Activated naive CD4-positive, alpha-beta T cell treated with anti-CD3 and anti-CD28 coated beads for 36 hours (primary cell): ENCODE measurements at regions of chrX and their contacts with region 1.

Region 1: DNA sequence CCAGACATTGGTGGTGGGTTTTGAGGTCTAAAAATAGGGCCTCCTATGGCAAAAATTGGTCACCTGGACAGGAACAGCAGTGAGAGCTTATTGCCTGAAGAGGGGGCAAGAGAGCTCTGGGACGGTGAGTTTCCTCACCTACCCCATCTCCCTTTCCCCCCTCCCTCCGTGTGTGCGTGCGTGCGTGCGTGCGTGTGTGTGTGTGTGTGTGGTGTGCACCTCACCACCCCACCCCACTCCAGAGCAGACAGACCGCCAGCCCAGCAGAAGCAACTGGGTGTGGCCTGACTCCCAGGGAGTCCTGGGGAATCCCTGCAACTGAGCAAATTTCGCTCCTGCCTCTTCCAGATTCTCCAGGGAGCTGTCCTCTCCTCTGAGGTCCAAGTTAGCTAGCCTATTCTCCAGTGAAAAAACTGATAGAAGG is 44.7 kb downstream of the PRPS1 start:
- DNase-seq: peak; percentile 81
- H3K4me3 Mint-ChIP-seq: peak overlapping the region; percentile 22
- H3K27ac Mint-ChIP-seq: peak overlapping the region; percentile 74
- H3K4me1 Mint-ChIP-seq: peaks cover 50% of the 10 kb centered on the region
- H3K27me3 Mint-ChIP-seq: no peaks in the 10 kb centered on the region

Region 2: GRCh38 chrX:107374132-107374531 is 298.8 kb before region 1 on chrX:
- CTCF ChIA-PET with region 1: no interaction called
- intact Hi-C with region 1: no loop called
- DNase-seq: no peak
- H3K4me3 Mint-ChIP-seq: no peak overlapping the region
- H3K27ac Mint-ChIP-seq: no peak overlapping the region
- H3K4me1 Mint-ChIP-seq: no peaks in the 10 kb centered on the region
- H3K27me3 Mint-ChIP-seq: no peaks in the 10 kb centered on the region

Region 3: DNA sequence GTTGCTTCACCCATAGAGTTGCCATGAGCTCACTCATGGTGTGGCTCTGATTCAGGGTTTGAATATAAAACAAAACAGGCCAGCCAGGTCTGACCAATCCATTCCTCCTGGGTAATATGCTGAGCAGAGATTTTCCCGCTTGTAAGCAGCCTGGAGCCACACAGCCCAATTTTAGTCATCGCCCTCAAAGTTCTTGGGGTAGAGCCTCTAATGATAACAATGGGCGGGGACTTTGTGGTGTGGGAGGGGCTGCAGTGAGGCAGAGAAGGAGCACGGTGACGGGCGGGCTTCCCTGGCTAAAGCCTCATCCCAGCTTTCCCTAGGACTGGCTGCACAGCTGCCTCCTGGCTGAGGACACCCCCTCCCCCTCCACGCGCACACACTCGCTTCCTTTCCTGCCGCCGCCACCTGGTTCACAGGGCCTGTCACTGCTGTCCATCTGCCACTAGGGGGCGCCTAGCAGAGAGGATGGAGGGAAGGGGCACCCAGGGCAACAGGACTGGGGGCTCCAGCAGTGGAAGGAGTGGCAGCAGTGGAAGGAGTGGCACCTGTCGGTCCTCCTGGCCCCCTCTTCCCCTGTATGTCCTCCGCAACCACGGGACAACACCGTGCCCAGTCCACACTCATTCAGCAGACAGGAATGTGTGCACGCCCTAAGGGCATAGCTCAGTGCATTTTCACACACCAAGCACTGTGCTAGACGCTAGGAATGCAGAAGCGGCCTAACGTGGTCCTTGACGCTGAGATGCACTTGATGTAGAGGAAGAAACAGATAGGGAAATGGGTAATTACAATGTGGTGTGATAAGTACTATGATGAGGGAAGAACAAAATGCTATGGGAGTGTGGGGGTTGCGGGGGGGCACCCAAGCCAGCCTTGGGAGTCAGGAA is 17.9 kb before region 1 on chrX:
- CTCF ChIA-PET with region 1: interaction called, 19 read pairs
- intact Hi-C with region 1: no loop called
- DNase-seq: peak; percentile 72
- H3K4me3 Mint-ChIP-seq: no peak overlapping the region
- H3K27ac Mint-ChIP-seq: no peak overlapping the region
- H3K4me1 Mint-ChIP-seq: peaks cover 15% of the 10 kb centered on the region
- H3K27me3 Mint-ChIP-seq: no peaks in the 10 kb centered on the region

Region 4: GRCh38 chrX:107716816-107717700 is 44.1 kb after region 1 on chrX:
- CTCF ChIA-PET with region 1: interaction called, 171 read pairs
- intact Hi-C with region 1: loop called (anchors 1 kb)
- DNase-seq: peak; percentile 87
- H3K4me3 Mint-ChIP-seq: peak overlapping the region; percentile 92
- H3K27ac Mint-ChIP-seq: peak overlapping the region; percentile 77
- H3K4me1 Mint-ChIP-seq: peaks cover 37% of the 10 kb centered on the region
- H3K27me3 Mint-ChIP-seq: no peaks in the 10 kb centered on the region

Region 5: GRCh38 chrX:107766470-107767150 is 93.6 kb after region 1 on chrX:
- CTCF ChIA-PET with region 1: no interaction called
- intact Hi-C with region 1: no loop called
- DNase-seq: no peak
- H3K4me3 Mint-ChIP-seq: no peak overlapping the region
- H3K27ac Mint-ChIP-seq: no peak overlapping the region
- H3K4me1 Mint-ChIP-seq: peaks cover 2% of the 10 kb centered on the region
- H3K27me3 Mint-ChIP-seq: no peaks in the 10 kb centered on the region

Region 6: DNA sequence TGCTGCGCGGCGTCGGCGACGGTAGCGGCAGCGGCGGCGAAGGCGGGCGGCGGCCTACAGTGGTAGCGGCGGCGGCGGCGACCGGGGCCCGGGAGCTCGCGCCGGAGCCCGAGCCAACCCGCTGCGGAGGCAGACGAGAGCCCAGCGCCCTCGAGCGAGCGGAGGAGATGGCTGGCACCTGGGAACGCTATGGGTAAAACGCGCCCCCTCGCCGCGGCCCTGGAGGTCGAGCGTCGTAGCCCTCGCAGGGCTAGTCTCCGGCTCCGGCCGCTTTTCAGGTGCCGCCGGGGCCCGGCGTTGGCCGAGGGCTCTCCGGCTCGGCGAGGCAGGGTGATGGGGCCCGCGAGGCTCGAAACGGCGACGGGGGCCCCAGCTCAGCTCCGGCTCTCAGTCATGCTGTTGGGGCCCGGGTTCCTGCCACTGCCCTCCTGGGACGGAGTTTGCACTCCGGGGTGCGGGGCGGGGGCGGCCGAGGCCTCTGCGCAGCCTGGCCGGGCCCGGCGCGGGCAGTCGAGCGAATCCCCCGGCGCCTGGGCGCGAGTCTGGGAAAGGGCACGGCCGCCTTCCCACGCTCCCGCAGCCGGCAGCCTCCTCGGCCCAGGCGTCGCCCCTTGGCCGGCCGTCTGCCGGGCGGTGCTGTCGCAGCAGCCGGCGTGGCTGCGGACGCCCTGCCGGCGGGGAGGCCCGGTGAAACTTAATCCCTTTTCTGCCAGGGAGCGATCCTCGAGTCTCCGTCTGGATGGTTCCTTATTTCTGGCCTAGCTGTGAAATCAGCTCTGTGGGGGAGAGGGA is 153.5 kb after region 1 on chrX:
- CTCF ChIA-PET with region 1: interaction called, 3 read pairs
- intact Hi-C with region 1: loop called (anchors 1 kb)
- DNase-seq: peak; percentile 14
- H3K4me3 Mint-ChIP-seq: peak overlapping the region; percentile 77
- H3K27ac Mint-ChIP-seq: peak overlapping the region; percentile 73
- H3K4me1 Mint-ChIP-seq: peaks cover 53% of the 10 kb centered on the region
- H3K27me3 Mint-ChIP-seq: no peaks in the 10 kb centered on the region

Region 7: DNA sequence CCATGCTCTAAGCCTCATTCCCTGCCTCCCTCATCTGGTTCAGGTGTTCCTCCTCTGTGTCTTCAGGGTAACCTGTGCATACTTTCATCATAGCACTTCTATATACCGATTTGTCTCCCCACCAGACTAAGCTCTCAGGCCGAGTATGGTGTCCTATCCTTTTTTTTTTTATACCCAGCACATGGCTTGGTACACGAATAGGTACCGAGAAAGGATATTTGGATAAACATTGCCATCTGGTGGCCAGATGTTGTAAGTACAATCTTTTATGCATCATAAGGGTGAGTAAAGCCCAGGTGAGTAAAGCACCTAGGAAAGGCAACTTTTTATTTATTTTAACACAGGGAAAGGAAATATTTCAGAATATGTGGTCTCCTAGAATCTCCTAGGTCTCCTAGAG is 221.1 kb after region 1 on chrX:
- CTCF ChIA-PET with region 1: interaction called, 12 read pairs
- intact Hi-C with region 1: loop called (anchors 1 kb)
- DNase-seq: peak; percentile 22
- H3K4me3 Mint-ChIP-seq: no peak overlapping the region
- H3K27ac Mint-ChIP-seq: no peak overlapping the region
- H3K4me1 Mint-ChIP-seq: no peaks in the 10 kb centered on the region
- H3K27me3 Mint-ChIP-seq: no peaks in the 10 kb centered on the region

Region 8: GRCh38 chrX:108070891-108071290 is 397.9 kb after region 1 on chrX:
- CTCF ChIA-PET with region 1: no interaction called
- intact Hi-C with region 1: loop called (anchors 1 kb)
- DNase-seq: no peak
- H3K4me3 Mint-ChIP-seq: no peak overlapping the region
- H3K27ac Mint-ChIP-seq: no peak overlapping the region
- H3K4me1 Mint-ChIP-seq: peaks cover 7% of the 10 kb centered on the region
- H3K27me3 Mint-ChIP-seq: no peaks in the 10 kb centered on the region